ENCODE measurements at regions of chr17 and their contacts with region 1.

Region 1: DNA sequence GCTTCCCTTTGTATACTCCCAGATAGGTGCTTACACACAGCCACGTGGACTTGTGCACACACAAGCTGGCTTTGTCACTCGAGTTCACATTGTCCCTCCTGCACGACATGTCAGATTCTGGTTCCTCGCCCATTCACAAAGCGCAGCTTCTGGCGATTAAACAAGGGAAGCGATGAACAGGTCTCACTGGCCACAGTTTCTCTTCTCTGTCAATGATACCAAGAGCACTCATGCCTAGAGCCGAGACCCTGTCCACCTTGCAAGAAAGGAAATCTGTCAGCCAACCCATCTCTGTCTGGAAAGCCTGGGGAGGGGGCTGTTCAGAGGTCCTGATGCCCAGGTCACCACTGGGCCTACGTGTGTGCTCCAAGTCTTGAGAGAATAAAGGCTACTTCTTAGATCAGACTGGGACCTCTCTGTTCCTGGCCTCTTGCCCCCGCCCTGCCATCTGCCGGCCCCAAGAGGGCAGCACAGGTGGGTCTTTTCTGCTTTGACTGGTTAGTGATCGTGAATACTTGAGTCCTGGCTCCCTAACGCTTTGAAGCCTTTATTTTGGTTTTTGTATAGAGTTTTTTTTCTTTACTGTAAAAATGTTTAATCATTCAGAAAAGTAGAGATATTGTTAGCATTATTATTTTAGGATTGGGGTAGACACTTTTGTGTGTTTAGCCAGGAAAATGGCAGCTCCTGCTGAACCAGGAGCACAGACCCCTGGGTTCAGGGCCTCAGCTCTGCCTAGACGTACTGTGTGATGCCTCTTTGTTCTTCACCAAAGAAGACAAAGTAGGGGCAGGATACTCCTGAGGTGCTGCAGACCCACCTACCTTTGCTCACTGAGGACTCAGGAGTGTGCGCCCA is 104.7 kb downstream of the MRM1 start:
- DNase-seq: peak in 6 of 9 donors; percentile 26 to 47 (median 40)
- ATAC-seq: peak; percentile 74
- H3K4me3 ChIP-seq: no peak overlapping the region
- H3K4me3 Mint-ChIP-seq: no peak overlapping the region
- H3K27ac ChIP-seq: no peak overlapping the region
- H3K27ac Mint-ChIP-seq: no peak overlapping the region
- H3K4me1 ChIP-seq: no peaks in the 10 kb centered on the region
- H3K4me1 Mint-ChIP-seq: peaks cover 0 to 5% (median 0%) of the 10 kb centered on the region in 7 donors
- H3K27me3 ChIP-seq: peaks cover 0 to 5% of the 10 kb centered on the region in 2 donors
- H3K27me3 Mint-ChIP-seq: peaks cover 29 to 43% (median 39%) of the 10 kb centered on the region in 5 donors

Region 2: DNA sequence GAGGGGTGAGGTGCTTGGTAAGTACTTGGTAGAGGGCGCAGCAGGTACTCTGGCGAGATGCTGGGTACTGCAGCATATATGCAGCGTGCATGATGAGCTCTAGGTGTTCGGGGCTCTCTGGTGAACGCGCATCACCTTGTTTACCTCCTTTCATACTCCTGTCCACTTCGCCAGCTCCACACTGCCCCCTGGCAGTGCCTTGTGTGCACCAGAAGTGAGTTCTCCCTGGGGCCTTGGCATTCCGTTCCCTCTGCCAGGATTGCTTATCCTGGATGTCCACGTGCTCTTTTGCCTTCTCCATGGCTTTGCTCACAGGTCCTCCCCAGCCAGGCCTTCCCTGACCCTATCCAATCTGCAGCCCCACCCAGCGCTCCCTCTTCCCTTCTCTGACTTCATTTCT is 49.5 kb after region 1 on chr17:
- CTCF ChIA-PET with region 1: no interaction called
- POLR2A ChIA-PET with region 1: no interaction called
- intact Hi-C with region 1: loop called (anchors 2 kb)
- DNase-seq: peak in 6 of 9 donors; percentile 14 to 40 (median 24)
- ATAC-seq: no peak
- H3K4me3 ChIP-seq: no peak overlapping the region
- H3K4me3 Mint-ChIP-seq: no peak overlapping the region
- H3K27ac ChIP-seq: no peak overlapping the region
- H3K27ac Mint-ChIP-seq: peak overlapping the region in 1 of 9 donors; percentile 30
- H3K4me1 ChIP-seq: no peaks in the 10 kb centered on the region
- H3K4me1 Mint-ChIP-seq: peaks cover 0 to 4% (median 0%) of the 10 kb centered on the region in 7 donors
- H3K27me3 ChIP-seq: no peaks in the 10 kb centered on the region
- H3K27me3 Mint-ChIP-seq: peaks cover 0 to 5% (median 0%) of the 10 kb centered on the region in 5 donors

Measured in naive thymus-derived CD4-positive, alpha-beta T cell (primary cell).